ENCODE measurements at regions of chr9 and their contacts with region 1.

Region 1: DNA sequence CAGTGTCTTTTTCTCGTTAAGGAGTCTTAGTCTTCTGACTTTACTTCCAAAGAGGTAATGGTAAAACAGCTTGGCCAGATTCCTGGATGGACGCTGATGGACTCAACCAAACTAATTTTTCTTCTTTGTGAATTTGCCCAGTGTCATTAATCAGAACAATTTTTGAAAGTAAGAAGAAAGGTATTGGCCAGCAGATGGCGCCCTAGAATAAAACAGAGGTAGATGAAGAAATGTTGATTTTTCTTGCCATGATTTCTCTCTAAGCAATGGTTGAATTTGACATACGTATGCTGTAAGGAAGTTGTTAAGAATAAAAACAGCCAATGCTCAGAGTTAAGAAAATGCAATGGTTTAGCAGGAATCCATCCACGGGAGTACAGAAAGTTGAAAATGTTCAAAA is 500.0 kb downstream of the DIRAS2 start:
- DNase-seq: peak; percentile 44
- H3K4me3 Mint-ChIP-seq: no peak overlapping the region
- H3K27ac Mint-ChIP-seq: no peak overlapping the region
- H3K4me1 Mint-ChIP-seq: no peaks in the 10 kb centered on the region
- H3K27me3 Mint-ChIP-seq: no peaks in the 10 kb centered on the region
- CTCF ChIP-seq: no peak

Region 2: DNA sequence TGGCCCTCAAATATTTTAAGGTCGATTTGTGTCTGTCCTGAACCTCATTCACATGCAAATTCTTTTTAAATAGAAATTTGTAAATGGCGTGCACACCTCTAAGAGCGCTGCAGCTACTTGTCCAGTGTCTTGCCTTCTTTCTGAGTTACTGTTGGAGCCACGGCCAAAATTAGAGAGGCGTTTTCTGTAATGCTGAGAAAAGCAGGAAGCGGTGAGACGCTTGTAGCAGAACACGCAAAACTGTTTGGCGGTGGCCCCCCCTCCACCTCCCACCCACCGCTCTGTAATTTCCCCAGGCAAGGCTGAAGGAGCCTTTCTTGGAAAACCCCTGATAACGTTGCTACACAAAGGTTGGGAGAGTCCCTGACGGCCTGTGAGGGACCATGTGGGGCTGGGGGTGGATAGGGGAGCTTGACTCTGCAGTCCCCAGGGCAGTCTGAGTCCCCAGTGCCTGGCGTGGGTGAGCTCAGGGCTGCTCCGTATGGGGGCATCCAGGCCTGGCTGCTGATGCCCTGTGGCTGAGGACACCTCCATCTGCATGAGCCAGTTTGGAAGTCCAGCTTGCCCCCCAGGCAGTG is 441.3 kb before region 1 on chr9:
- CTCF ChIA-PET with region 1: no interaction called
- intact Hi-C with region 1: no loop called
- DNase-seq: no peak
- H3K4me3 Mint-ChIP-seq: no peak overlapping the region
- H3K27ac Mint-ChIP-seq: no peak overlapping the region
- H3K4me1 Mint-ChIP-seq: no peaks in the 10 kb centered on the region
- H3K27me3 Mint-ChIP-seq: peaks cover 91% of the 10 kb centered on the region
- CTCF ChIP-seq: no peak

Region 3: GRCh38 chr9:90038763-90039162 is 103.8 kb before region 1 on chr9:
- CTCF ChIA-PET with region 1: no interaction called
- intact Hi-C with region 1: no loop called
- DNase-seq: no peak
- H3K4me3 Mint-ChIP-seq: no peak overlapping the region
- H3K27ac Mint-ChIP-seq: no peak overlapping the region
- H3K4me1 Mint-ChIP-seq: no peaks in the 10 kb centered on the region
- H3K27me3 Mint-ChIP-seq: peaks cover 32% of the 10 kb centered on the region
- CTCF ChIP-seq: no peak

Region 4: GRCh38 chr9:90219548-90220118 is 77.1 kb after region 1 on chr9:
- CTCF ChIA-PET with region 1: no interaction called
- intact Hi-C with region 1: loop called (anchors 1 kb)
- DNase-seq: peak; percentile 63
- H3K4me3 Mint-ChIP-seq: peak overlapping the region; percentile 58
- H3K27ac Mint-ChIP-seq: no peak overlapping the region
- H3K4me1 Mint-ChIP-seq: peaks cover 7% of the 10 kb centered on the region
- H3K27me3 Mint-ChIP-seq: no peaks in the 10 kb centered on the region
- CTCF ChIP-seq: peak; percentile 74

Region 5: DNA sequence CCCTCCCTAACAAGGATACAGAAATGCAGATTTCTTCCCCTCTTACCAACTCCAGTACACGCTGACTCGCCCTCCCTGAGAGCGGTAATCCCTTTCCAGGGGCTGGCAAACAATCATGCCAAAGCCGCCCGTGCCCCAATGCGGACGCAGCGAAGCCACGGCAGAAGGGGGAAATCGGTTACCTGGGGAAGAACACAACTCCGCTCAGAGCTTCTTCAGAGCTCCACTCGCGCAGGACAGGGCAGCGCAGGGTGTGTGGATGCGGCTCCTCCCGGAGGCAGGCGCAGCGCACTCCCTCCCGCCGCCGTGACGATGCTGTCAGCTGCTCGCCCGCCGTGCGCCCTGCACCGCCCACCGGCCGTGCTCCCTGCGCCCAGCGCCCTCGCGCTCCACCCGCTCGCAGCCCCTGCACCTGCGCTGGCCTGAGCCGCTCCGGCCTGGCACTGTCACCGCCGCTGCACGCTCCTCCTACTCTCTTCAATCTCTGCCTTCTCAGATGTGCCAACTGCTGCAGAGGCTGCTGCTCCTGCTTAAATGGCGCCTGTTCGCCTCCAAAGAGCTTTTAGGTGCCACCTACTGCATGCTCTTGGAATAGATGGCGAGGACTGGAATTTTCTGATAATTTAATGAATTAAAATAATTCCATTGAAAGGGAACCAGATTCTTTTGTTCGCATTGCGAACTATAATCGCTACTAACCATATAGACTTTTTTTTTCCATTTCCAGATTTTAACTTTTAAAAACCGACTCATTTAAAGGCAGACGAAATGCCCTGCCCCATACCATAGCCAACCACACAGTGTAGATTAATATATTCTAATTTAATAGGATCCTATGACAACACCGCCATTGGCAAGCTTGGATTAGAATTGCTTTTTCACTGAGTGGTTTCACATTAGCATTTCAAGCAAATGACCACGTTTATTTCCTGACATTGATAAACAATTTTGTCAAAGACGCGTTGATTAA is 500.3 kb after region 1 on chr9 and contains the start of gene DIRAS2:
- CTCF ChIA-PET with region 1: no interaction called
- intact Hi-C with region 1: loop called (anchors 5 kb)
- DNase-seq: peak; percentile 78
- H3K4me3 Mint-ChIP-seq: peak within 1 kb of the TSS; percentile 84
- H3K27ac Mint-ChIP-seq: peak within 1 kb of the TSS; percentile 44
- H3K4me1 Mint-ChIP-seq: peaks cover 10% of the 10 kb centered on the region
- H3K27me3 Mint-ChIP-seq: peaks cover 5% of the 10 kb centered on the region
- CTCF ChIP-seq: peak; percentile 43
- total RNA-seq, gene DIRAS2: 1.5 and 1.7 TPM in 2 replicates

Region 6: GRCh38 chr9:90773617-90774016 is 631.0 kb after region 1 on chr9:
- CTCF ChIA-PET with region 1: no interaction called
- intact Hi-C with region 1: loop called (anchors 5 kb)
- DNase-seq: peak; percentile 26
- H3K4me3 Mint-ChIP-seq: no peak overlapping the region
- H3K27ac Mint-ChIP-seq: no peak overlapping the region
- H3K4me1 Mint-ChIP-seq: no peaks in the 10 kb centered on the region
- H3K27me3 Mint-ChIP-seq: no peaks in the 10 kb centered on the region
- CTCF ChIP-seq: peak; percentile 41

Measured in Calu3 (cell line).